ENCODE measurements at regions of chr10 and their contacts with region 1.

Region 1: GRCh38 chr10:3043512-3044368 is 23.6 kb upstream of the PFKP start:
- DNase-seq: peak; percentile 60 to 81 (median 73)
- H3K4me3 ChIP-seq: peak overlapping the region in 1 of 7 experiments; percentile 45
- H3K27ac ChIP-seq: no peak overlapping the region
- H3K4me1 ChIP-seq: no peaks in the 10 kb centered on the region
- H3K27me3 ChIP-seq: peaks cover 0 to 8% (median 2%) of the 10 kb centered on the region in 5 experiments

Region 2: GRCh38 chr10:2839081-2839725 is 204.5 kb before region 1 on chr10:
- CTCF ChIA-PET with region 1: interaction called, 38 read pairs
- POLR2A ChIA-PET with region 1: no interaction called
- DNase-seq: peak; percentile 27 to 66 (median 43)
- H3K4me3 ChIP-seq: no peak overlapping the region
- H3K27ac ChIP-seq: no peak overlapping the region
- H3K4me1 ChIP-seq: no peaks in the 10 kb centered on the region
- H3K27me3 ChIP-seq: peaks cover 0 to 6% (median 2%) of the 10 kb centered on the region in 5 experiments

Region 3: DNA sequence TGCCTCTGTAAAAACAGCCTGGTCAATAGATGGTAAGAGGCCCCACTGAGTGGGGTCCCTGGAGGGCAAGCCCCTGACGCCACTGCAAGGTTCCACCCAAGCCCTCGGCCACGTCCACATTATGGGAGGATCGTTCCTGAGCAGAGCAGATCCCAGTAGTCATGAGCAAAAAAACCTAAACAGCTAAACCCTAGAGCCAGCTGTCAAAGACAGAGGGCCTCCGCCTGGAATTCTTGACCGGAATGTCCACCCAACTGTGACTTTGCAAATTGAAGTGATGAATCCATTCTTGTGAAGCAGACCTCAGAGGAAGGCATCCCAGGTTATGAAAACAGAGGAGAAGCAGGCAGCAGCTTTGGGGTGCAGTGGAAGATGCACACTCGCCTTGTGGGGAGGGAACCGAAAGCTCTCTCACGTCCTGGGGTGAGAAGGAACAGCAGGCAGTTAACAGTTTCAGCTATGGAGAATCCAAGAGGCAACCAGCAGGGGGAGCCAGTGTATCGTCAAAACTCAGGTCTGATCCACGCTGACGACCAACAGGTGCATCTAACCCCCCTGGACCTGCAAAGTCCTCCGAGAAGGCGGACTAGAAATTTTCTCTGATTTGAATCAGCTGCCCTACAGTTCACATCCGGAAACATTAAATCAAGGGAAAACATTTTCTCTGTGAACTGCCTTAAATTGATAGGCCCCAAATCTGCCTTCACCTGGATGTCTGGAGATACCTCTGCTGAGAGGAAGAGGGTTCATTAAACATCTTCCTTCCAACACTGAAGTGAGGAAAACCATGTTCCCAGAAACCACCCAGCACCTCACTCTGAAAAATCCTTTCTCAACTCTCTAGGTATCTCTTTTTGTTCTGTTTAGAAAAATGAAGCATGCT is 115.5 kb before region 1 on chr10:
- CTCF ChIA-PET with region 1: interaction called, 11 read pairs
- POLR2A ChIA-PET with region 1: no interaction called
- DNase-seq: peak; percentile 72 to 89 (median 76)
- H3K4me3 ChIP-seq: peak overlapping the region in 1 of 7 experiments; percentile 8
- H3K27ac ChIP-seq: no peak overlapping the region
- H3K4me1 ChIP-seq: peaks cover 0 to 20% (median 7%) of the 10 kb centered on the region in 4 experiments
- H3K27me3 ChIP-seq: peaks cover 0 to 6% (median 0%) of the 10 kb centered on the region in 5 experiments

Region 4: GRCh38 chr10:3054183-3054850 is 10.6 kb after region 1 on chr10:
- CTCF ChIA-PET with region 1: interaction called, 27 read pairs
- POLR2A ChIA-PET with region 1: no interaction called
- DNase-seq: no peak
- H3K4me3 ChIP-seq: no peak overlapping the region
- H3K27ac ChIP-seq: no peak overlapping the region
- H3K4me1 ChIP-seq: no peaks in the 10 kb centered on the region
- H3K27me3 ChIP-seq: peaks cover 0 to 12% (median 0%) of the 10 kb centered on the region in 5 experiments

Measured in common myeloid progenitor, CD34-positive (primary cell).